ENCODE measurements at regions of chr1 and their contacts with region 1.

Region 1: DNA sequence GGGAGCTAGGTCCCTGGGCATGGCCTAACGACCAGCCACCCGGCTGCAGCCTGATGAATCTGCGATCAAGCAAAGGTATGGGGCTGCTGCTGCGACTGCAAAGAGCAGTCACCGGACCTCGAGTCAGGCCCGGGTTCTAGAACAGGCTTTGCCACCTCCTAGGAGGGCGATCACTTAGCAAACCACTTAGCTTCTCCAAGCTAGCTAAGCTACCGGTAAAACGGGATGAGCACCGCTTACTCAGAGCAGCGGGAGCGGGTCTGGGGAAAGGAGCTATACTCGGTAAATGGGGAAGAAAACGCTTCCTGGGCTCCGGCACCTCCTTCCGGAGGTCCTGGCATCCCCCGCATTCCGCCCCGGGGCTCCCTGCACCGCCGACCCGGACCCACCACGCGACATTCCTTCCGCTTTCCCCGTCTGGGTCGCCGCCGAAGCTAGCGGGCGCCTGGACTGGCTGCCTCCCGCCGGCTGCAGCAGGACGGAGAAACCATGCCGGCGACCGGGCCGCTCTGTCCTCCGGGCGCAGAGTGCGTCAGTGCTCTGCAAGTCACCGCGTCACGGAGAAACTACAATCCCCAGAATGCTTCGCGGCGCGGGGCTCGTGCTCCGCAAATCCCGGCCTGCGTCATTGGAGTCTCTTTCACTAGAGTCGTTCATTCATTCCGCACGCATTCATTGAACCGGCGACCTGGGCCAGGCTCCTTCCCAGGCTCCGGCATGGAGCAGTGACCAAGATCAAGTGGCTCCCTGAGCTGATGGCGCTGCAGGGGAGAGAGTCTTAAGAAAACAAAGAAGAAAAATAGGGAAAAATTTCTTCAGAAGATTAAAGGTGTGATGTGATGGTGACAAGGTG is at the start of gene LSM10:
- DNase-seq: peak; percentile 87
- ATAC-seq: peak; percentile 66
- H3K4me3 ChIP-seq: peak within 1 kb of the TSS; percentile 87 to 92 (median 91)
- H3K27ac ChIP-seq: peak within 1 kb of the TSS; percentile 80
- H3K4me1 ChIP-seq: peaks cover 41% of the 10 kb centered on the region
- H3K27me3 ChIP-seq: no peaks in the 10 kb centered on the region; a peak in 1 of 5 replicates
- CTCF ChIP-seq: peak; percentile 24
- EP300 ChIP-seq: no peak
- POLR2A ChIP-seq: peak; percentile 80 to 90
- RAD21 ChIP-seq: no peak
- total RNA-seq, gene LSM10: 14.0 and 17.0 TPM in 2 replicates

Region 2: GRCh38 chr1:36223993-36224536 is 173.5 kb before region 1 on chr1 and contains the start of gene THRAP3:
- CTCF ChIA-PET with region 1: no interaction called
- POLR2A ChIA-PET with region 1: interaction called, 16 read pairs
- in situ Hi-C with region 1: no loop called
- intact Hi-C with region 1: no loop called
- DNase-seq: peak; percentile 98
- ATAC-seq: peak; percentile 96
- H3K4me3 ChIP-seq: peak within 1 kb of the TSS; percentile 86 to 100 (median 89)
- H3K27ac ChIP-seq: peak within 1 kb of the TSS; percentile 94
- H3K4me1 ChIP-seq: peaks cover 37% of the 10 kb centered on the region
- H3K27me3 ChIP-seq: no peaks in the 10 kb centered on the region; a peak in 1 of 5 replicates
- CTCF ChIP-seq: peak; percentile 27; the same call in 1 of the 2 replicates
- EP300 ChIP-seq: peak; percentile 19 to 24; a peak in 2 of 4 replicates
- POLR2A ChIP-seq: peak; percentile 82 to 93
- RAD21 ChIP-seq: no peak; the same call in 1 of the 2 replicates
- total RNA-seq, gene THRAP3: 92.6 and 127 TPM in 2 replicates

Region 3: DNA sequence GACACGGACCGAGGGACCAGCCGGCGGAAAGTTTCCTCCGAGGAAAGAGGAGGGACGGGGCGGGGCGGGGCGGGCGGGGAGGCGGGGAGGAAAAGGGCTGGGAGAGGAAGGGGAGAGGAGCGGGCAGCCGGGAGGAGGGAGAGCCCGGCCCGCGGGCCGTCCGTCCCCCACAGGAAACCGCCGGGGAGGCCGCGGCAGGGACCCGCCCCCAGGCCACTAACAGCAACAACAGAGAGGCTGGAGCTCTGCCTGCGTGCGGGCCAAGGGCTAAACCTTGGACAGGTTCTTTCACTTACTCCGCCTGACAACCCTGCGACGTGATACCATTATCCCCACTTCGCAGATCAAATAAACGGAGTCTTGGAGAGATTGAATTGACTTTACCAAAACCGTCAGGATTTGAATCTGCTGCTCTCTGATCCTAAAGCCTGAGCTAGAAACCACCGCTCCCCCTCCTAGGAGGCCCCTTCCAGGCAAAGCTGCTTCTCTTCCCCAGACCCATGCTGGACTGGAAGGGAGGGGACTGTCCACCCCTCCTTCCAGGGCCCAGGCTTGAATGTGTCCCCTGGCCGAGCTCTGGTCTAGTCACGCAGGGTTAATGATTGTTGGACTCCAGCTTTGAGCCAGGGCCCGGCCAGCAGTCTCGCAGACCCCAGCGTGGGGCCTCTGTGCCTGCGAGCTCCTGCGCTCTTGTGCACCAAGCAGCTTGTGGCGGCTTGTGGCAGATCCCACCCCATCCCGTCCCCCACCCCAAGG is 73.8 kb before region 1 on chr1 and contains the start of gene EVA1B:
- CTCF ChIA-PET with region 1: no interaction called
- POLR2A ChIA-PET with region 1: interaction called, 29 read pairs
- in situ Hi-C with region 1: no loop called
- intact Hi-C with region 1: no loop called
- DNase-seq: peak; percentile 88
- ATAC-seq: peak; percentile 90
- H3K4me3 ChIP-seq: peak within 1 kb of the TSS; percentile 72 to 82 (median 72)
- H3K27ac ChIP-seq: peak within 1 kb of the TSS; percentile 62
- H3K4me1 ChIP-seq: peaks cover 46% of the 10 kb centered on the region
- H3K27me3 ChIP-seq: no peaks in the 10 kb centered on the region; a peak in 1 of 5 replicates
- CTCF ChIP-seq: peak; percentile 17; the same call in 1 of the 2 replicates
- EP300 ChIP-seq: peak in 1 of 2 experiments; percentile 28; a peak in 1 of 4 replicates
- POLR2A ChIP-seq: peak; percentile 94 to 95
- RAD21 ChIP-seq: peak; percentile 22; the same call in 1 of the 2 replicates
- total RNA-seq, gene EVA1B: 3.8 and 6.6 TPM in 2 replicates

Region 4: DNA sequence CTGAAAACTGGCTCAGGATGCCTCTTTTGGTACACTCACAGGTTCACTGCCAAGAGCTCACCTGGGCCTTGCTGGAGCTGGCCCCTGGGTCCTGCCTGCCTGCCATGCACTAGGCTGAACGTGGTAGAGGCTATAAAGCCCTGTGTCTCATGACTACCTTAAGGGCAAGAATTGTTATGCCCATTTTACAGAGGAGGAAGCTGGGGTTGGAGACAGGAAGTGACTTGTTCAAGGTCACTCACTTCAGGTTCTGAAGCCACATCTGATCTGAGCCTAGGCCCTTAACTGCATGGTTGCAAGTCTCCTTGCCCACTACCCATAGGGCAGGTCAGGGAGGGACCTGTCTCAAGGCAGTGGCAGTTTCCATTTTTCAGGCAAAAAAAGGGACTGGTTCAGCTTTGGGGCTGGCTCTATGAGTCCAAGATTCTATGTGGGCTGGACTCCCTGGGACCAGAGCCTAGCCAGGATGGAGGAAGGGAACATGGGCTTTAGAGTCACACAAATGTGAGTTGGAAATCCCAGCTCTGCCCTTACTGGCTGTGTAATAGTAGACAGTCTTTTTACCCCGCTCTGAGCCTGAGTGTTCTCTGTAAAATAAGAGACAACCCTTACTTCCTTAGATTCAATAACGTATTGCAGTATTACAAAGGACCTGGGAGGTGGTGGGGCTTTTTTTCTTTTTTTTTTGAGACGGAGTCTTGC is 19.7 kb before region 1 on chr1:
- CTCF ChIA-PET with region 1: no interaction called
- POLR2A ChIA-PET with region 1: interaction called, 32 read pairs
- in situ Hi-C with region 1: no loop called
- intact Hi-C with region 1: no loop called
- DNase-seq: no peak
- ATAC-seq: no peak
- H3K4me3 ChIP-seq: no peak overlapping the region; a peak in 1 of 6 replicates
- H3K27ac ChIP-seq: no peak overlapping the region
- H3K4me1 ChIP-seq: peaks cover 88% of the 10 kb centered on the region
- H3K27me3 ChIP-seq: no peaks in the 10 kb centered on the region
- CTCF ChIP-seq: no peak
- EP300 ChIP-seq: no peak
- POLR2A ChIP-seq: no peak
- RAD21 ChIP-seq: no peak

Region 5: DNA sequence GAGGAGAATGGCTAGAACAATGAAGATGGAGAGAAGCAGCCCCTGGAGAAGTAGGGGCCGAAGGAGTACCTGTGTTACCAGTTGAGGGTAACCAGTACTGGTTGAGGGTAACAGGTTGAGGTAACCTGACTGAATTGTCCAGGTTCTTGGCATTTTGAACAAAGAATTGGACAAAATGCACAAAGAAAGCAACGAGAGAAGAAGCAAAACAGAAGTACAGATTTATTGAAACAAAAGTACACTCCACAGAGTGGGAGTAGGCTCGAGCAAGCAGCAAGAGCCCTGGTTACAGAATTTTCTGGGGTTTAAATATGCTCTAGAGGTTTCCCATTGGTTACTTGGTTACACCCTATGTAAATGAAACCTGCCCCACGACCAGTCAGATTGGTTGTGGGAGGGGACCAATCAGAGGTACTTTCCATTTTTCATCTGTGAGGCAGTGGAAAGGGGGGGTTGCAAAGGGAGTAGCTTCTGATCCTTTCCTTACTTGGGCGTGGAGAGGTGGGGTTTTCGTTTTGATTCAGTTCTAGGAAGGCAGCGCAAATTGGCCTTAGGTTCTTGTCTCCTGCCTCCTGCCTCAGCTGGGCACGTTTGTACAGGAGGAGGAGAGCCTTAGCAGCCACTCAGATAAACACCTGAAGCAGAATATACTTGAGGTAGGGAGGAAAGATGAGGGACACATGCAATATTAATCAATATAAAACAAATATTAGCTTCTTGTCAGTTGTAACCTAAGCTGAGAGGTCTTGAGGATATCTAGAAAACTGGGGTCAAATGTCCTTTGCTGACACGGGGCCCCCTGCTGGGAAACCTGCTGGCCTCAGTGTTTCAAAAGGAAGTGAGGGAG is 14.3 kb after region 1 on chr1:
- CTCF ChIA-PET with region 1: no interaction called
- POLR2A ChIA-PET with region 1: interaction called, 10 read pairs
- in situ Hi-C with region 1: no loop called
- intact Hi-C with region 1: no loop called
- DNase-seq: peak; percentile 17
- ATAC-seq: peak; percentile 56
- H3K4me3 ChIP-seq: no peak overlapping the region
- H3K27ac ChIP-seq: no peak overlapping the region
- H3K4me1 ChIP-seq: no peaks in the 10 kb centered on the region
- H3K27me3 ChIP-seq: no peaks in the 10 kb centered on the region
- CTCF ChIP-seq: peak; percentile 24; the same call in 1 of the 2 replicates
- EP300 ChIP-seq: no peak
- POLR2A ChIP-seq: no peak
- RAD21 ChIP-seq: no peak

Region 6: DNA sequence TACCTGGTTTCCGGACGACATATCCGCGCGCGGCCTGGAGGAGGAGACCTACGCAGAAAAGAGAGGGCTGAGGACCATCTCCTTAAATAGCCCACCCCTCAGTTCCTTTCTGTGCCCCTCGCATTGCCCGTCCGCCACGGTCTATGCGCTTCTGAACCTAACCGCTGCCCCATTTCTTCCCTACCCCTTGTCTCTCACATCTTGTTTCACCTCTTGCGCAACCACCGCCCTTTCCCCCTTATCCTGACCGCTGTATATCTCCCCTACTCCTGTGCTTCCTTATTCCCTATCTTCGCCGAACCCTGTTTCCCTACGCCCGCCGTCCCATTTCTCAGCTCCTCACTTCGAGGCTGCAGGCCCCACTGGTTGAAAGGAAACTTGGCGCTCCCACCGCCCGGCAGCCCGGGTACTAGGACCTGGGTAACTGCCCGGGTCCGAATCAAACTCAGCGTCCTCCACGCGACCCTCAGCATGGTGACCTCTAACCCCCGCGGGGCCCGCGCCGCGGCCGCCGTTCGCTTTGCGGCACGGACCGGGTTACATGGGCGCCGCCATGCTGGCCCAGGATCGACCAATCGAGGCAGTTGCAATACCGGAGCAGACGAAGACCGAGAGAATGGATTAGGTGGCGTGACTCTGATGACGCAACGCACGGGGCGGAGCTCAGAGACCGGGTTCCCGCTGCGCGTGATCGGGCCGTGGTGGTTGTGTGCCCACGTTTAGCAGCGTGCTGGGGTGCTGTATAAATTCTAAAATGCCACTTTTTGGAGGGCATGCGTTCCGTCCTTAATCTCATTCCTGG is 66.4 kb after region 1 on chr1 and contains the start of gene MRPS15:
- CTCF ChIA-PET with region 1: no interaction called
- POLR2A ChIA-PET with region 1: interaction called, 18 read pairs
- in situ Hi-C with region 1: no loop called
- intact Hi-C with region 1: no loop called
- DNase-seq: peak; percentile 90
- ATAC-seq: peak; percentile 86
- H3K4me3 ChIP-seq: peak within 1 kb of the TSS; percentile 83 to 91 (median 90)
- H3K27ac ChIP-seq: peak within 1 kb of the TSS; percentile 93
- H3K4me1 ChIP-seq: peaks cover 55% of the 10 kb centered on the region
- H3K27me3 ChIP-seq: no peaks in the 10 kb centered on the region; a peak in 1 of 5 replicates
- CTCF ChIP-seq: no peak
- EP300 ChIP-seq: peak; percentile 80 to 94
- POLR2A ChIP-seq: peak; percentile 95 to 97
- RAD21 ChIP-seq: peak; percentile 26; the same call in 1 of the 2 replicates
- total RNA-seq, gene MRPS15: 113 and 137 TPM in 2 replicates

Region 7: DNA sequence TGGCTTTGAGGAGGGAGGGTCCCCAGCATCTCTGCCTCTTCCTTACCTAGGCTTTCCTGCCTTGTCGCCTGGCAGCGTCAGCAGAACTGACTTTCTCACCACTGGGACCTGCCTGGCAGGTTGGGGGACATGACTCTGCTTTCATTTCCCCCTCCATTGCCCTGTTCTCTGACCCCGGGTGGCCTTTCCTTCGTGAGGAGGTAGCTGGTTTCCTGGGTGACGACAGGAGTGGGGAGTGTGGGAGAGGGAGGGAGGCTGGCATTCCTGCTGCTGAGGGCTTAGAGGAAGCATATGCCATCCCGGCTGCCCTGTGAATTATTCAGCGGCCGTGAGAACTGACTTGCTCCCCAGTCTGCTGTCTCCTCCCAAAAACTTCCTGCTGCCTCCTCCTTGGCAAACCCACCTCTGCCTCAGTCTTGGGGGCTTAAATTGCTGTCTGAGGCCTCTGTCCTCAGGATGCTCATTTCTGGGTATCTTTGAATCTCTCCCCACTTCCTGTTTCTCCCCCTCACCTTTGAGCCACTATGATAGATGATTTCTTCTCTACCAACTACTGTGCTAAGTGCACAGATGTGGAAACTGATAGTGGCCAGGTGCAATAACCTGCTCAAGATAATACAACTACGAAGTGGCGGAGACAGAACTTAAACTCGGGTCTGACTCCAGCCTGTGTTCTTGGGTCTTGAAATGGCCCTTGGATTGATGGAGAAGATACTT is 267.1 kb after region 1 on chr1:
- CTCF ChIA-PET with region 1: no interaction called
- POLR2A ChIA-PET with region 1: no interaction called
- in situ Hi-C with region 1: no loop called
- intact Hi-C with region 1: no loop called
- DNase-seq: no peak
- ATAC-seq: no peak
- H3K4me3 ChIP-seq: no peak overlapping the region
- H3K27ac ChIP-seq: no peak overlapping the region
- H3K4me1 ChIP-seq: no peaks in the 10 kb centered on the region
- H3K27me3 ChIP-seq: peaks cover 0 to 27% of the 10 kb centered on the region in 2 experiments; a peak in 4 of 5 replicates
- CTCF ChIP-seq: no peak
- EP300 ChIP-seq: no peak
- POLR2A ChIP-seq: no peak
- RAD21 ChIP-seq: no peak

Measured in HepG2 (cell line).